ENCODE measurements at regions of chr4 and their contacts with region 1.

Region 1: GRCh38 chr4:145557720-145558119 is 61.5 kb upstream of the MMAA start:
- DNase-seq: peak in 1 of 2 donors; percentile 63
- H3K4me3 ChIP-seq: no peak overlapping the region
- H3K27ac ChIP-seq: no peak overlapping the region
- H3K4me1 ChIP-seq: no peaks in the 10 kb centered on the region
- H3K27me3 ChIP-seq: no peaks in the 10 kb centered on the region
- CTCF ChIP-seq: peak; percentile 57 to 81 (median 69)

Region 2: GRCh38 chr4:145234091-145234706 is 323.5 kb before region 1 on chr4:
- intact Hi-C with region 1: loop called (anchors 10 kb)
- DNase-seq: no peak
- H3K4me3 ChIP-seq: no peak overlapping the region
- H3K27ac ChIP-seq: no peak overlapping the region
- H3K4me1 ChIP-seq: no peaks in the 10 kb centered on the region
- H3K27me3 ChIP-seq: no peaks in the 10 kb centered on the region
- CTCF ChIP-seq: peak; percentile 19 to 56 (median 32)

Measured in ascending aorta (tissue), 2 donors.